ENCODE measurements at regions of chr2 and their contacts with region 1.

Region 1: GRCh38 chr2:231925303-231926179 is 655 bp downstream of the NPPC start:
- DNase-seq: peak; percentile 72 to 87
- H3K4me3 ChIP-seq: peak overlapping the region; percentile 32 to 71 (median 49)
- H3K27ac ChIP-seq: no peak overlapping the region
- H3K4me1 ChIP-seq: peaks cover 0 to 8% of the 10 kb centered on the region in 2 donors
- H3K27me3 ChIP-seq: peaks cover 0 to 17% of the 10 kb centered on the region in 2 donors
- CTCF ChIP-seq: peak; percentile 45 to 92 (median 47)
- POLR2A ChIP-seq: no peak

Region 2: DNA sequence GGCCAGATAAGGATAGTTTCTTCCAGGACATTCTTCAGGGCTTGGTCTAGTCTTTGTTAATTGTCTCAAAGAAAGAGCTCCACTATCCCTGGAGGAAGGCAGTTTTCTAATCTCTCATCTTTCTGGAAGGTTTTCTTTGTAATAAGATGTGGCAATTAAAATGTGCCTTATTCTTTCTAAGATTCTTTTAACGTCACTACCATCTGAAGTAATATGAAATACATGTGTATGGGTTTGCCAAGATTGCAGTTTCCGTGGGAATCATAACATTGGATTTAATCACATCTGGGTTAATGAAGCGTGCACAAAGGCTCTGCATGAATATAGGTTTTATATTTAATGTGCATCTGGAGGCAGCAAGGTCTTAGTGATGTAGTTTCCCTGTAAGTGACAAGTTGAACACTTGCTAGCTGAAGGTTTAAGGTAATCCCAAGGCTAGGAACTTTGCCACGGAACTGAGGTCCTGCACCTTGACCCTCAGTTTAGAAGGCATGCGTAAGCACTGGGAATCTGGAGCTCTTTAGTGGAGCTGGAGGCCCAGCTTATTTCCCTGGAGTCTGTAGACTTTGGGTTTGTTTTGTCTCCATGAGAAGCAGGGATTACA is 61.7 kb after region 1 on chr2:
- intact Hi-C with region 1: no loop called
- DNase-seq: no peak
- H3K4me3 ChIP-seq: no peak overlapping the region
- H3K27ac ChIP-seq: no peak overlapping the region
- H3K4me1 ChIP-seq: no peaks in the 10 kb centered on the region
- H3K27me3 ChIP-seq: no peaks in the 10 kb centered on the region
- CTCF ChIP-seq: no peak
- POLR2A ChIP-seq: no peak

Region 3: DNA sequence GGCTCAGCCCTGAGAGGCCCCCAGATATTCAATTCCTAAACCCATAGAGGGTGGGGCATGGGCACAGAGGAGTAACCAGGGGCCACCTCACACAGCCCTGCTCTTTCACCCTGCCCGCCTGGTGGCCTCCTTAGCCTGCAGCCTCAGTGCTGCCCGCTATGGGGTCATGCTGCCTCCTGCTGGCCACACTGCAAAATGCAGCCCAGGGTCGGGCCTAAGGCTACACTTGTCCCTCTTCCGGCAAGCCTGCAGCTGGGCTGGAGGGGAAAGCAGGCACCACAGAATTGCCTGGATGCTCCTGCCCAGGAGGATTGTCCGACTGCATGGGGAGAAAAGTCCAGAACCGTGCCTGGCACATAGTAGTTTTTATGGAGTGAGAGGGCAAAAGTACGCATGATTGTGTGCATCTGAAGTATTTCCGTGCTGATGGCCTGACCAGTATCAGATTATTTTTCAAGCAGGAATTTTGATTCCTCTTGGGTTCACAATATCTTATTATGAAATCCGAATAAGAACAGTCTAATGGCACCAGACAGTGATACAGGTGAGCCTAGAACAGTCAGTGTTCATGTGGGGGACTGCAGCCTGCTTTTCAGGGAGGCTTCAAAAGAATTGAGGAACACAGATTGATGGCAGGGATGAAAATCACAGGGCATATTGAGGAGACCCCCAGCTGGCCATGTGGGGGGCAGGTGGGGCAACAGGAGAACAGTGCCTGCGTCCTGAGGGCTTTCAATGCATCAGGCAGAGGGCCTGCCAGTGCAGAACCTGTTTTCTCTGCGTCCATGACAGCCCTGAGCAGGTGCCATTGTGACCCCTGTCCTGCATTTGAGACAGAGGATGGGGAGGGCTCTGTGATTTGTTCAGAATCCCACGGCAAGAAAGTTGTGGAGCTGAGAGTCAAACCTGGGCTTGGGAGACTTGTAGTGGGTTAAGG is 401.8 kb after region 1 on chr2:
- intact Hi-C with region 1: loop called (anchors 10 kb)
- DNase-seq: peak in 1 of 2 donors; percentile 78
- H3K4me3 ChIP-seq: no peak overlapping the region
- H3K27ac ChIP-seq: no peak overlapping the region
- H3K4me1 ChIP-seq: no peaks in the 10 kb centered on the region
- H3K27me3 ChIP-seq: no peaks in the 10 kb centered on the region
- CTCF ChIP-seq: peak; percentile 73 to 95 (median 94)
- POLR2A ChIP-seq: no peak